Dorsolateral prefrontal cortex (tissue), 120 donors: ENCODE measurements at regions of chr9 and their contacts with region 1.

Region 1: DNA sequence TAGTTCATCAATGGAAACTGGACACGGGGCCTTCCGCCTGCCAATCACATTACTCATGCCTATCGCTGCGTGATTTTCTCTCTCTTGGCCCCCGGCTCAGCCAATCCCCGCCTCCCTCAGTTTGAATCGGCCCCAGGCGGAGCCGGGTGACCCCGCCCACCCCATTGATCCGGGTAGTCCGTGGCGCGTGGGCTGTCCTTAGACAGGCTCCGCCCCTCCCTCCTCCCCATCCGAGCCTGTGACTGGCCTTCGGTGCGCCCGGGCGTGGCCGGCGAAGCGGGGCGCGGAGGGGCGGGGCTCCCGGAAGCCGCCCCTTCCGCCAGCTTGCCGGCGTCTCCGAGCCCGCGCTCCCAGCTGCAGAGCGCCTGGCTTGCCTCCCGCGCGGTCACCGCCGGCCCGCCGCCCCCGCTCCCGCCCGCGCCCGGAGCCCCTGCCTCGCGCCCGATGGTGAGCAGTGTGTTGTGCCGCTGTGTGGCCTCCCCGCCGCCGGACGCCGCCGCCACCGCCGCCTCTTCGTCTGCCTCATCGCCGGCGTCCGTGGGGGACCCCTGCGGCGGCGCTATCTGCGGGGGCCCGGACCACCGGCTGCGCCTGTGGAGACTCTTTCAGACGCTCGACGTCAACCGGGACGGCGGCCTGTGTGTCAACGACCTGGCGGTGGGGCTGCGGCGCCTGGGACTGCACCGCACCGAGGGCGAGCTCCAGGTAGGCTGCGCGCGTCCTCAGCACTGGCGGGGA is at the start of gene SLC25A25:
- DNase-seq: peak; percentile 99 to 100 (median 100)
- H3K4me3 ChIP-seq: peak within 1 kb of the TSS; percentile 64 to 97 (median 90)
- H3K27ac ChIP-seq: peak within 1 kb of the TSS; percentile 68 to 100 (median 98)
- H3K27me3 ChIP-seq: no peaks in the 10 kb centered on the region
- CTCF ChIP-seq: peak in 11 of 56 donors; percentile 6 to 38 (median 18)
- total RNA-seq, gene SLC25A25: 17.8 to 66.6 (median 35.3) TPM

Region 2: DNA sequence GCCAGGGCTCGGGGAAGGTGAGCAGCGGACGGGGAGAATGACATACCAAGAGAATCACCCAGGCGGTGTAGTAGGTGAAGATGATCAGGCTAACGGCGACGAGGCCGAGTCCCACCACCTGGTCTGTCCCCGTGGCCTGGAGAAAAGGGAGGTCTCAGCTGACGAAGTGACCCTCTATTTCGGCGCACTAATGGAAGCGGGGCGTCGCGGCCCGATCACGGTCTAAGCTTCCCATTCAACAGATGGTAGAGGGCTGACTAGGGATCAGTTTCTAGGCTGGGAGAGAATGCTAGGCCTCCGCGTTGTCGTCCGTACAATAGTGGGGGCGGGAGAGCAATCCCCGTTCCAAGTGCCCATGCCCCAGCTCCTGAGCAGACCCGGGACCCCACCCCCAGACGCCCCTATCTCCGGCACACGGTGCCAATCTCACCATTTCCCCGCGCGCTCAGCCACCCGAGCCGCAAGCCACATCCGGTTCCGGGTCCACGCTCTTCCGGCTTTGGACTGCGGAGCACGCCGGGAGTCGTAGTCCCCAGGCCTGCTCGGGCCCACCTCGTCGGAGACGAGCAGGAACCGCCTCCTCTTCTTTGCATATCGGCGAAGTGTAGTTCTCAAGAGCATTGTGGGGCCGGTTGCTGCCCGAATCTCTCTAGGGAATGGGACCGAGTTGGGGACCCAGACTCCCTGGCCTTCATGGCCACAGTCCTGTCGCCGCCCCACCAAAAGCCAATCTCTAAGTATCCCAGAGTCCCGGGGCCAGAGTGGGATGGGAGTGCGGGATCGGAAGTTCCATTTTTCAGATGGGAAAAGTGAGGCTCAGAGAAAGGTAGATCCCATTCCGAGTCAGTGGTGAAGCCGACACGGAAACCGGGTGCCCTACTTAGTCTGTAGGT is 130.4 kb before region 1 on chr9 and contains the start of gene DPM2:
- intact Hi-C with region 1: no loop called
- DNase-seq: peak; percentile 59 to 87 (median 81)
- H3K4me3 ChIP-seq: peak within 1 kb of the TSS; percentile 63 to 94 (median 86)
- H3K27ac ChIP-seq: peak within 1 kb of the TSS in 58 of 59 donors; percentile 30 to 89 (median 77)
- H3K27me3 ChIP-seq: no peaks in the 10 kb centered on the region
- CTCF ChIP-seq: peak in 14 of 56 donors; percentile 5 to 29 (median 16)
- total RNA-seq, gene DPM2: 23.7 to 41.9 (median 31.9) TPM

Region 3: DNA sequence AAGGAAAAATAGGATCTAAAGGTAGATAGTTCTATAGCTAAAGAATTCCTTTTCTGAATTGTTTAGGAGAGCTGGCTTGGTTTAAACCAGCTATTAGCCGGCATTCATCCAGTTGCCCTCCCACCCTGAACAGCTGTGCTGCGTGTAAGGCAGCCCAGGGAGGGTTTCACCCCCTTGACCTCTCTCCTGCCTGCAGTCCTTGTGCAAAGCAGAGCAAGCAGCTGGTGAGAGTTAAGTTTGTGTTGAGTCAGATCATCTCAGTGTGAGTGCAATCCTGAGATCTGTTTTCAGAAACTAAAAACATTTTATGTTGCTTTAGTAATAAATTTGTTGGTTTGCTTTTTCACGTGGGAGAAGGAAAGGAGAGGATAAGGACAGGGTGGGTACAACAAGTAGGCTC is 13.0 kb after region 1 on chr9:
- intact Hi-C with region 1: no loop called
- DNase-seq: no peak
- H3K4me3 ChIP-seq: no peak overlapping the region
- H3K27ac ChIP-seq: peak overlapping the region in 43 of 59 donors; percentile 1 to 79 (median 48)
- H3K27me3 ChIP-seq: no peaks in the 10 kb centered on the region
- CTCF ChIP-seq: no peak

Region 4: GRCh38 chr9:128117613-128118471 is 49.8 kb after region 1 on chr9:
- intact Hi-C with region 1: loop called in 1 of 2 experiments (anchors 5 kb)
- DNase-seq: peak; percentile 89 to 97 (median 92)
- H3K4me3 ChIP-seq: peak overlapping the region in 6 of 59 donors; percentile 5 to 31 (median 24)
- H3K27ac ChIP-seq: peak overlapping the region in 4 of 59 donors; percentile 16 to 44 (median 27)
- H3K27me3 ChIP-seq: no peaks in the 10 kb centered on the region
- CTCF ChIP-seq: peak; percentile 95 to 100 (median 100)

Region 5: DNA sequence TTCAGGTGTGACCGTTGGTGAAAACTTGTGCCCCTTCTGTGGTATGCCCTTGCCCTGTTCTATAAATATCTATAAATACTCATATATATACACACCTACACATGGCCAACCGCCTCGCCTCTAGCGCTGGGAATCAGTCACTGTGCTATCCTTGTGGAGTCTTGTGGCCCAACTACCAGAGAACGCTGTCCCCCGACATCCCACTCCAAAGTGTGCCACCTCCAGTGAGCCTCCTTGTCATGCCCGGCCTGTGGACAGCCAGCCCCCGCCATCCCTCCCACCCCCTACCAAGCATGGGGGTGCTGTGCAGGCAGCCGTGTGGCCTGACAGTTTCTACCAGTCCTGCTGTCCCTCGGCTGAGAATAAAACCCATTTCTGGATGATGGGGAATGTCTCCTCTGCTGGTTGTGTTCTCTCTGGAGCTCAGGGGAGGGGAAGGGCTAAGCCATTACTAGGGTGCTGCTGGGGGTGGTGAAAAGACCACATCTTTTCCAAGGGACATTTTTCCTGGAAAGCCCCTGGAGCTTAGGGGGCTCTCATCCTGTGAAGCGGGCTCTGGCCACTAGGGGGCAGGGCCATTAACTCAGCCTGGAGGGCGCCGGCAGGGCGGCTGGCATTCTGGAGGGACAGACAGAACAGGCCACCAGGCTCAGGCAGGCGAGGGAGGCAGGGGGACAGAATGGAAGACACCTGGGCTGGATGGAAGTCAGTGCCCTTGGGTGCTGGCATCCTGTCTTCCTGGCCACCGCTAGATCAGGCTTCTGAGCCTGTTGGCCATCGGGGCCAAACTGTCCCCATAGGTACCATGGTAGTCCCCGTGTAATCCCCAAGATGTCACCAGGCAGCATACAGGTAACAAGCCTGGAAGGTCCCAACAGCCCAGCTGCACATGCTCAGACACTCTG is 187.1 kb after region 1 on chr9:
- intact Hi-C with region 1: no loop called
- DNase-seq: peak in 7 of 10 donors; percentile 53 to 75 (median 58)
- H3K4me3 ChIP-seq: no peak overlapping the region
- H3K27ac ChIP-seq: peak overlapping the region in 34 of 59 donors; percentile 5 to 90 (median 60)
- H3K27me3 ChIP-seq: peaks cover 0 to 5% (median 0%) of the 10 kb centered on the region in 45 donors
- CTCF ChIP-seq: peak; percentile 41 to 86 (median 77)